ENCODE measurements at regions of chr4 and their contacts with region 1.

Region 1: GRCh38 chr4:101169044-101170014 is 178.0 kb downstream of the PPP3CA start:
- DNase-seq: peak; percentile 83
- ATAC-seq: peak; percentile 100
- H3K4me3 ChIP-seq: no peak overlapping the region; a peak in 1 of 6 replicates
- H3K27ac ChIP-seq: no peak overlapping the region
- H3K4me1 ChIP-seq: peaks cover 46% of the 10 kb centered on the region
- H3K27me3 ChIP-seq: no peaks in the 10 kb centered on the region; a peak in 1 of 5 replicates
- CTCF ChIP-seq: peak; percentile 96
- EP300 ChIP-seq: peak in 1 of 2 experiments; percentile 88; a peak in 2 of 4 replicates
- POLR2A ChIP-seq: no peak
- RAD21 ChIP-seq: peak; percentile 96

Region 2: DNA sequence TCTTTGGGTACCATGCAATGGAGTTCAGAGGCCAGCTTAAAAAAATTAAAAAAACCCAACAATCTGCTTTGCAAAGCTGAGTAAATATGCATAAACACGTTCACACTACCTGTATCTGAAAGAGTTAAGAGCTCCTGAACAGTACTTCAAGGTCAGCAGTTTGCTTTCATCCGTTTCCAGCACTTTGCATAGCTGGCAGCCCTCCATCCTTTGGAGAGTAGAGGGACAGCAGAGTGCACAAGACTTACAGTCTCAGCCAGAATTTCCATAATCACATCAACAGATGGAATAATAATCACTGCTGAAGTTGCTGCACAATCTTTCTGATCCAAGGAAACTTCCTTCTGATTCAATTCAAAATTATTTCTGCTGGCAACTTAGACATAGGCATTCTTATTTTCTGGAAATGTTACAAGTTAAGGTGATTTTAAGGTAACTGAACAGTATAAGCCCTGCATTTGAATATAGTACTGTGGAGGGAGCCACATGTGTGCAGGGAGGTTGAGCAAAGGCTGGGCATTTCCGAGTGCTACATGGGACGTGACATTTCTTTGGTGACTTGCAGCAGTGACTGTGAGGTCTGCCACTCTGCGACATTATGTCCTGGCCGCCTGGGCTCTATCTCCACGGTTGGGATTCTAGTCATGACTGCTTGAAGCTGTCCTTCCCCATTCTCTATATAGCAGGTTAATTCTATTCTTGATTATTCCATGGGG is 578.0 kb before region 1 on chr4:
- CTCF ChIA-PET with region 1: no interaction called
- POLR2A ChIA-PET with region 1: no interaction called
- in situ Hi-C with region 1: no loop called
- intact Hi-C with region 1: no loop called
- DNase-seq: no peak
- ATAC-seq: no peak
- H3K4me3 ChIP-seq: no peak overlapping the region
- H3K27ac ChIP-seq: no peak overlapping the region
- H3K4me1 ChIP-seq: no peaks in the 10 kb centered on the region
- H3K27me3 ChIP-seq: no peaks in the 10 kb centered on the region
- CTCF ChIP-seq: no peak
- EP300 ChIP-seq: no peak
- POLR2A ChIP-seq: no peak
- RAD21 ChIP-seq: no peak

Region 3: GRCh38 chr4:100907465-100908454 is 261.6 kb before region 1 on chr4:
- CTCF ChIA-PET with region 1: no interaction called
- POLR2A ChIA-PET with region 1: no interaction called
- in situ Hi-C with region 1: no loop called
- intact Hi-C with region 1: loop called (anchors 1 kb)
- DNase-seq: peak; percentile 7
- ATAC-seq: peak; percentile 91
- H3K4me3 ChIP-seq: no peak overlapping the region
- H3K27ac ChIP-seq: no peak overlapping the region
- H3K4me1 ChIP-seq: peaks cover 9% of the 10 kb centered on the region
- H3K27me3 ChIP-seq: no peaks in the 10 kb centered on the region
- CTCF ChIP-seq: peak; percentile 30; the same call in 1 of the 2 replicates
- EP300 ChIP-seq: no peak
- POLR2A ChIP-seq: no peak
- RAD21 ChIP-seq: no peak

Region 4: DNA sequence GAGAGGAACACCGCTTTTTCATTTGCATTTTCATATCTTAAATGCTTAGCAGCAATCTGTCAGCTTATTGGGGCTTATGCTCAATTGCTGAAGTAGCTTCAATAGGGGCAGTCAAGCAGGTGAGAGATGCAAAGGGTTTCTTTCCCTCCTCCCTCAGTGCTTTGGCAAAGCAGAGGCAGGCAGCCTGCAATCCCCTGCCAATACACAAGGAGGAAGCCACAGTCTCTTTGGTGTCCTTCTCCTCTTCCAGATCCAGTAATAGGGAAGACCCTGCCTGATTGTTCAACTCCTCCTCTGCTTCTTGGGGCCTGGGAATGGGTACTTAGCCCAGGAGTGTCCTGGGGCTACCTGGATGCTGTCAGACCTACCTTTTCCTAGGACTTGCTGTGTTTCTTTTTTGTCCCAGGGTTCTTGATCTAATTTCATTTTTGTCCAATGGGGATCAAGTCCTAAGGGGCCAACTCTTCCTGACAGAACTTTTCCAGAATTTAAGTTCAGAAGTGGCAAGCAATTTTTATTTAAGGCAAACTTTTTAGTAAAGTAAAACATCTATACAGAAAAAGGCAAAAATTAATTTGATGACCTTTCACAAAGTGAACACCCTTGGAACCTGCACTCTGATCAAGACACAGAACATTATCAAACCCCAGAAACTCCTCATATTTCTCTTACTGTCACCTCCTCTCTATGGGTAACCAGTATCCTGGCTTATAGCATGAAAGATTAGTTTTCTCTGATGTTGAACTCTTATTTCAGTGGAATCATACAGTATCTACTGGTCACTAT is 82.3 kb before region 1 on chr4:
- CTCF ChIA-PET with region 1: no interaction called
- POLR2A ChIA-PET with region 1: no interaction called
- in situ Hi-C with region 1: no loop called
- intact Hi-C with region 1: loop called (anchors 1 kb)
- DNase-seq: peak; percentile 7
- ATAC-seq: peak; percentile 84
- H3K4me3 ChIP-seq: no peak overlapping the region
- H3K27ac ChIP-seq: no peak overlapping the region
- H3K4me1 ChIP-seq: no peaks in the 10 kb centered on the region
- H3K27me3 ChIP-seq: no peaks in the 10 kb centered on the region
- CTCF ChIP-seq: peak; percentile 28; the same call in 1 of the 2 replicates
- EP300 ChIP-seq: no peak
- POLR2A ChIP-seq: no peak
- RAD21 ChIP-seq: no peak; the same call in 1 of the 2 replicates

Region 5: GRCh38 chr4:101114936-101115372 is 54.4 kb before region 1 on chr4:
- CTCF ChIA-PET with region 1: no interaction called
- POLR2A ChIA-PET with region 1: no interaction called
- in situ Hi-C with region 1: no loop called
- intact Hi-C with region 1: loop called (anchors 2 kb)
- DNase-seq: peak; percentile 99
- ATAC-seq: peak; percentile 100
- H3K4me3 ChIP-seq: no peak overlapping the region; a peak in 1 of 6 replicates
- H3K27ac ChIP-seq: peak overlapping the region; percentile 86
- H3K4me1 ChIP-seq: peaks cover 38% of the 10 kb centered on the region
- H3K27me3 ChIP-seq: no peaks in the 10 kb centered on the region
- CTCF ChIP-seq: no peak
- EP300 ChIP-seq: peak; percentile 59 to 92; a peak in 3 of 4 replicates
- POLR2A ChIP-seq: no peak
- RAD21 ChIP-seq: no peak

Region 6: GRCh38 chr4:101347557-101348366 is 178.4 kb after region 1 on chr4:
- CTCF ChIA-PET with region 1: no interaction called
- POLR2A ChIA-PET with region 1: no interaction called
- in situ Hi-C with region 1: no loop called
- intact Hi-C with region 1: loop called (anchors 5 kb)
- DNase-seq: peak; percentile 87
- ATAC-seq: peak; percentile 81
- H3K4me3 ChIP-seq: peak overlapping the region; percentile 95 to 98 (median 96)
- H3K27ac ChIP-seq: peak overlapping the region; percentile 87
- H3K4me1 ChIP-seq: peaks cover 38% of the 10 kb centered on the region
- H3K27me3 ChIP-seq: no peaks in the 10 kb centered on the region; a peak in 1 of 5 replicates
- CTCF ChIP-seq: peak; percentile 32; the same call in 1 of the 2 replicates
- EP300 ChIP-seq: no peak
- POLR2A ChIP-seq: peak in 1 of 2 experiments; percentile 59; a peak in 2 of 4 replicates
- RAD21 ChIP-seq: 0 out of 2 replicates have a peak, but pooled peaks have one; percentile 11

Region 7: DNA sequence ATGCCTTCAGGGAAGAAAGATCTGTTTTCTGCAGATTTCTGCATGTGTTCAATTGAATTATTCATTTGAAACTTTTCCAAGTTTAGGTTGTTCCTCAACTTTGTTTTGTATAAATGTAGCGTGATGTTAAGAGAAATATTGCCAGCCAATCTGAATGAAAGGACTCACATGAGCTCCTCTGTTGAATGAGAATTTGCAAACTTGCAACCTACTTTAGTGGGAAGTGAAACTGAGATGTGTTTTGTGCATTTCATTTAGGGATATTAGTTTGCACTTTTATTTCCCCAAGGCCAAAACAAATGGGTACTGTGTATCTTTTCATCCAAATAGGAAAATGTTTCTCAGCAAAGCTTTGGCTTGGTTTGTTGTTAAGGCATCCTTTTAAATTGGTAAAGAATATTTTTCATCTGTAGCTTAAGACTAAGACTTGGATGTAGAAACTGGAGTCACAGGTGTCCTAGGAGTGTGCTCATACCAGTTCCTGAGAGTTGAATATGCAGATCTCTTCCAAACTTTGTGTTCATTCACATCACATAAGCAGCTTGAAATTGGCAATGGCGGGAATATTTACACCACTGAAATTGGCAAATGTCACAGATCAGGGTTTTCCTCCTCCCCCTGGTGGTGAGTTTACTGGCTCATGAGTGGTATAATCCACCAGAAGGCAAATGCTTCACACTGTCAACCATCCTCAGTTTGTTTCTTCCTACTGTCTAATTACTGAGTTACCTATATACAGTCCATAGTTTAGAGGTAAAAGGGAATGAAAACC is 427.6 kb after region 1 on chr4:
- CTCF ChIA-PET with region 1: no interaction called
- POLR2A ChIA-PET with region 1: no interaction called
- in situ Hi-C with region 1: no loop called
- intact Hi-C with region 1: loop called (anchors 1 kb)
- DNase-seq: no peak
- ATAC-seq: peak; percentile 45; the same call in 1 of the 3 replicates
- H3K4me3 ChIP-seq: no peak overlapping the region
- H3K27ac ChIP-seq: no peak overlapping the region
- H3K4me1 ChIP-seq: no peaks in the 10 kb centered on the region
- H3K27me3 ChIP-seq: no peaks in the 10 kb centered on the region
- CTCF ChIP-seq: peak; percentile 36
- EP300 ChIP-seq: no peak
- POLR2A ChIP-seq: no peak
- RAD21 ChIP-seq: no peak

Region 8: GRCh38 chr4:101730291-101731117 is 561.2 kb after region 1 on chr4:
- CTCF ChIA-PET with region 1: interaction called, 27 read pairs
- POLR2A ChIA-PET with region 1: no interaction called
- in situ Hi-C with region 1: loop called (anchors 10 kb)
- intact Hi-C with region 1: loop called (anchors 1 kb)
- DNase-seq: peak; percentile 54
- ATAC-seq: peak; percentile 99
- H3K4me3 ChIP-seq: no peak overlapping the region
- H3K27ac ChIP-seq: no peak overlapping the region
- H3K4me1 ChIP-seq: no peaks in the 10 kb centered on the region
- H3K27me3 ChIP-seq: no peaks in the 10 kb centered on the region
- CTCF ChIP-seq: peak; percentile 85
- EP300 ChIP-seq: no peak
- POLR2A ChIP-seq: no peak
- RAD21 ChIP-seq: peak; percentile 73

Region 9: GRCh38 chr4:101865501-101866099 is 696.3 kb after region 1 on chr4:
- CTCF ChIA-PET with region 1: no interaction called
- POLR2A ChIA-PET with region 1: no interaction called
- in situ Hi-C with region 1: no loop called
- intact Hi-C with region 1: no loop called
- DNase-seq: peak; percentile 83
- ATAC-seq: peak; percentile 92
- H3K4me3 ChIP-seq: no peak overlapping the region
- H3K27ac ChIP-seq: peak overlapping the region; percentile 51
- H3K4me1 ChIP-seq: peaks cover 19% of the 10 kb centered on the region
- H3K27me3 ChIP-seq: no peaks in the 10 kb centered on the region
- CTCF ChIP-seq: no peak
- EP300 ChIP-seq: peak in 1 of 2 experiments; percentile 35; a peak in 1 of 4 replicates
- POLR2A ChIP-seq: no peak
- RAD21 ChIP-seq: no peak

Measured in HepG2 (cell line).